Pancreas (tissue), 10 donors: ENCODE measurements at regions of chr2 and their contacts with region 1.

Region 1: DNA sequence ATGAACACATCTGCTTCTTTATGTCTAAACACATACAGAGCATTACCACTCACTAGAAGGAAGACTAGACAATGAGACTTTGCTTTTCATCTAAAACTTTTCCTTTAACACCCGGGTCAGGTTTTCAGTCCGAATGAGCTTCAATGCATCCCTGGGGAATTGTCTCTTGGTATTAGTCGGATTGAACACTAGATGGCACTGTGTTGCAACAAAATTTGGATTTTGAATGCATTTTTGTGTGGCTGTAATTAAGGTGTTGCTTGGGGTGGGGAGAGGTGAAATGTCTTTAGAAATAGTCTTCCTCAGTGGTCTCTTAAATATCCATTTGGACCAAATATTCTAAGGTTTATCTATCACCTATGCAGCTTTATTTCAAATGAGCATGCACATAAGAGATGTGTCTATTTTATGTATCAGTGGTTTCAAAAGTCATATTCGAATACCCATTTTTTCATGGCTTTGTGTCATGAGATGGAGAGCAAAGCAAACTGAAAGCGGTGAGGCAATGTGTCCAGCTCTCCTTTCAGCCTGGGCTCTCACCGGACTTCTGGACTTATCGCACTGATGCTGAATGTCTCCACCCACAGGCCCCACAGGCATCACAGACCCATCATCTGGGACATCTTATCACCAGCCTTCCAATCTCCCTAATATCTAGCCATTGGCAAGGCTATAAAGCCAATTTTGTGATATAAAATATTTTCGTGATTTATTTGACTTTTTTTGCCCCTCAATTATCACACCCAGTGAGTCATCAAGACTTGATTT is 510.3 kb downstream of the RNF144A start:
- DNase-seq: peak in 2 of 6 donors; percentile 9 to 26
- ATAC-seq: peak; percentile 62 to 77 (median 74)
- H3K4me3 ChIP-seq: no peak overlapping the region
- H3K27ac ChIP-seq: no peak overlapping the region
- H3K4me1 ChIP-seq: no peaks in the 10 kb centered on the region
- H3K27me3 ChIP-seq: no peaks in the 10 kb centered on the region
- CTCF ChIP-seq: peak; percentile 49 to 68 (median 55)

Region 2: DNA sequence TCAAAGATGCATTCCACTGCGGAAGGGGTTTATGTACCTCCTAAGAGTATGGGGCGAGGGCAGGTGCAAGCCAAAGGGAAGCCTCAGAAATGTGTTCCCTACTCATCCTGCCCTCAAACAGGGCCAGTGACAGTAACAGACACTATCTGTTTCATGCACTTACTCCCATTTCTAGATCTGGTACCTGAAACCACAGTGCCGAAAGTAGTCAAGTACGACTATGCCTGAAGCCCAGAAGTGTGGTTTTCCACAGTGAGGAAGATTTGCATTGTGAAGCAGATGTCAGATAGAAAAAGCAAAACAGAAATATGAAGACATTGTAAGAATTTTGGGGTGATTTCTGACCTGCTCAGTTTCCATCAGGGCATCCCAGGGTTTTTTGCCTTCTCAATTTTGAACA is 238.4 kb after region 1 on chr2:
- intact Hi-C with region 1: loop called in 2 of 3 experiments (anchors 5 to 10 kb)
- DNase-seq: no peak
- ATAC-seq: no peak
- H3K4me3 ChIP-seq: no peak overlapping the region
- H3K27ac ChIP-seq: no peak overlapping the region
- H3K4me1 ChIP-seq: no peaks in the 10 kb centered on the region
- H3K27me3 ChIP-seq: no peaks in the 10 kb centered on the region
- CTCF ChIP-seq: no peak

Region 3: DNA sequence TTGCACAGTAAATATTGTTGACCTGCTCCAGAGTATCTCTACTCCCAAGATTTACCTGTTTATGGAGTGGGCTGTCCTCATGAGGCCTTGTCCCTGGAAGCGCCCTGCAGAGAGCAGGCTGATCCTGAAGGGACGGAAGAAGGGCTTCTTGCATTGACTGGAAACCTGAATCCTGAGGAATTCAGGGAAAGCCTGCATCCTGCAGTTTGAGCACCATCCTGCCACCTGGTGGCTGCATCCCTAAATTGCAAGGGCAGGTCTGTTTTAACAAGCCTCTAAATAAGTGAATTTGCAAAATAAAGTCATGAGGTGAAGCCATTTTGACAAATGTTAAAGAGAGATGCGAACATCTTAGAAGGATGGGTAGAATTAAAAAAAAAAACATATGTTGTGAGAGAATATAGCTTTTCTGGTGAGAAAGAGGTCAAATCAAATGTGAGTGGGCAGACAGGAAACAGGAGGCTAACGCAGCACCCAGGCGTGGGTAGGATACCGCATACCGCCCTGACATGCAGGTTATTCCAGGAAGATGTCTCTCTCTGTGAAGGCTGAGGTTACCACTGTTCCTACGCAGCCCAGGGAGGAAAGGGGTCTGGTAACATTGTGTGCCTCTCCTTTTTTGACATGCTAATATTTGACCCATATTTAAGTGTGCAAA is 244.7 kb after region 1 on chr2:
- intact Hi-C with region 1: loop called in 2 of 3 experiments (anchors 5 to 10 kb)
- DNase-seq: peak; percentile 36 to 88 (median 70)
- ATAC-seq: peak in 3 of 4 donors; percentile 82 to 88 (median 82)
- H3K4me3 ChIP-seq: no peak overlapping the region
- H3K27ac ChIP-seq: no peak overlapping the region
- H3K4me1 ChIP-seq: no peaks in the 10 kb centered on the region
- H3K27me3 ChIP-seq: no peaks in the 10 kb centered on the region
- CTCF ChIP-seq: peak; percentile 54 to 68 (median 62)

Region 4: DNA sequence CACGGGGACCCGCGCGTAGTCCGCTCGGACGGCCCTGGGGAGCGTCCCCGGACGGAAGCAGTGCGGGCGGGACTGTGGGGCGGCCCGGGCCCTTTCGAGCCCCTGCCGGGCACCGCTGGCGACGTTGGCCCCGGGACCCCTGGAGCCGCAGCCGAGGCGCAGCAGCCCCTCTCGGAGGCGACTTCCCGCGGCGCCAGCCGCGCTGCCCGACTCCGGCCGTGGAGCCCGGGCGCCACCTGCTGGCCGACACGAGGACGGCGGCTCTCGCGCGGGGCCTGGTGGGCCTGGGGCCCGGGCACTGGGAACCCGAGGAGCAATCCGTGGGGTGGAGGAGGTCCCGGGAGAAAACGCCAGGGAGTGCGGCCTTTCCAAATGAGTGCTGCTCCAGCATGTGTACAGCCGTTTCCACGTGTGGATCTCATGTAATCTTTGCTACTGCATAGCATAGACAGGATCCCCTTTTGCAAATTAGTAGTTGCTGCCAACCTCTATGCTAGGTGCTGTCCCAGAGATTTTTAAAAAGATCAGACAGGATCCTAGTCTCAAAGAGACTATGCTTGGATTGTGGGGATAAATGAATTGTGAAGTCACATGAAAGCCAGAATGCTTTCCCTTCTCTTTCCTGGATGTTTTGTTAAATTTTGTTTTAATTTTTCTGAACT is 1258.4 kb after region 1 on chr2:
- intact Hi-C with region 1: loop called in 2 of 3 experiments (anchors 5 to 10 kb)
- DNase-seq: peak; percentile 51 to 97 (median 83)
- ATAC-seq: peak; percentile 41 to 66 (median 46)
- H3K4me3 ChIP-seq: peak overlapping the region; percentile 36 to 73 (median 65)
- H3K27ac ChIP-seq: peak overlapping the region; percentile 50 to 89 (median 86)
- H3K4me1 ChIP-seq: peaks cover 0 to 6% (median 2%) of the 10 kb centered on the region in 3 donors
- H3K27me3 ChIP-seq: no peaks in the 10 kb centered on the region
- CTCF ChIP-seq: peak; percentile 94 to 98 (median 98)

Region 5: GRCh38 chr2:8693155-8693821 is 1265.8 kb after region 1 on chr2:
- intact Hi-C with region 1: loop called in 2 of 3 experiments (anchors 5 to 10 kb)
- DNase-seq: peak in 3 of 6 donors; percentile 33 to 88 (median 55)
- ATAC-seq: peak; percentile 56 to 97 (median 91)
- H3K4me3 ChIP-seq: peak overlapping the region in 1 of 4 donors; percentile 31
- H3K27ac ChIP-seq: no peak overlapping the region
- H3K4me1 ChIP-seq: no peaks in the 10 kb centered on the region
- H3K27me3 ChIP-seq: peaks cover 0 to 4% (median 0%) of the 10 kb centered on the region in 4 donors
- CTCF ChIP-seq: peak; percentile 24 to 62 (median 59)